Mammary epithelial cell (primary cell): ENCODE measurements at regions of chr22 and their contacts with region 1.

Region 1: DNA sequence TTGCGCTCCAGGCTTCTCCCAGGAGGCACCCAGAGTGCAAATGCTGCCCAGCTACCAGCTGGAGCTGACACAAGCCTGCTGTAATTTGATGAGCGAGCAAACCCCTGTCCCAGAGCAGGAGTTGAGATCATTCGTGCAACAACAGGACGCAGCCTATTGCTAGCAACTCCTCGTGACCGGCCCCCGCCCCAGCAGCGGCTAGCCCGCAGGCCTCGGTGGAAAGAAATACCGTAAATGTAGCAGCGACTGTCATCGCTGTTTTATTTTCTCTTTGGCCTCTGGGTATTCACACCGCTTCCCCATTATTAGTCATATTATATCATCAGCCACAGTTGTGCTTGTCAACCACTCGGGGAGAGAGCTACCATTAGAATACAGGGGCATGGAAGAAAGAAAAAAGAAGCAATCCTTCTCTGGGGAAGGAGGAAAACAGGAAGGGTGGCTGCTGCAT is 59.2 kb upstream of the ATXN10 start:
- DNase-seq: peak; percentile 91
- H3K4me3 ChIP-seq: peak overlapping the region in 2 of 3 experiments; percentile 8 to 24
- H3K27ac ChIP-seq: peak overlapping the region; percentile 64
- H3K4me1 ChIP-seq: peaks cover 20% of the 10 kb centered on the region
- H3K27me3 ChIP-seq: no peaks in the 10 kb centered on the region
- CTCF ChIP-seq: no peak

Region 2: GRCh38 chr22:45638834-45639746 is 26.6 kb after region 1 on chr22:
- CTCF ChIA-PET with region 1: no interaction called
- dilution Hi-C with region 1: loop called (anchors 5 kb)
- in situ Hi-C with region 1: no loop called
- intact Hi-C with region 1: no loop called
- DNase-seq: peak; percentile 79
- H3K4me3 ChIP-seq: no peak overlapping the region
- H3K27ac ChIP-seq: peak overlapping the region; percentile 78
- H3K4me1 ChIP-seq: peaks cover 22% of the 10 kb centered on the region
- H3K27me3 ChIP-seq: no peaks in the 10 kb centered on the region
- CTCF ChIP-seq: peak in 1 of 2 donors; percentile 13

Region 3: DNA sequence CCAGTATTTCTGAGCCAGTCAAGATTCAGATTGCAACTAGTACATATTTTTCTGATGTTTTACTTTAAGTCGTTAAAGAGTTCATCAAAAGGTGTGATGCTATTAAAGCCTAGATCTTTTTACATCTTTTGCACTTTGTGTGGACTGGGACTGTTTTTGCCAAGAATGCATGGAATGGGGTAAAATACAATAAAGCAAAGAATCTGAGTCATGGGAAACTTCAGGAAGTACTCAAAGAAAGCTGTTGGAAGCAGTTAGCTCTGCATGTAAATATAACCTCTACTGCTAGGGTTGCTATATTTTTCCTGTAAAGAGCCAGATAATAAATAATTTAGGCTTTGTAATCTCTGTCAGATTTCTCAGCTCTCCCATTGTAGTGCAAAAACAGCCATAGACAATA is 80.1 kb after region 1 on chr22:
- CTCF ChIA-PET with region 1: no interaction called
- dilution Hi-C with region 1: loop called (anchors 5 kb)
- in situ Hi-C with region 1: no loop called
- intact Hi-C with region 1: no loop called
- DNase-seq: no peak
- H3K4me3 ChIP-seq: no peak overlapping the region
- H3K27ac ChIP-seq: no peak overlapping the region
- H3K4me1 ChIP-seq: peaks cover 31% of the 10 kb centered on the region
- H3K27me3 ChIP-seq: no peaks in the 10 kb centered on the region
- CTCF ChIP-seq: no peak

Region 4: DNA sequence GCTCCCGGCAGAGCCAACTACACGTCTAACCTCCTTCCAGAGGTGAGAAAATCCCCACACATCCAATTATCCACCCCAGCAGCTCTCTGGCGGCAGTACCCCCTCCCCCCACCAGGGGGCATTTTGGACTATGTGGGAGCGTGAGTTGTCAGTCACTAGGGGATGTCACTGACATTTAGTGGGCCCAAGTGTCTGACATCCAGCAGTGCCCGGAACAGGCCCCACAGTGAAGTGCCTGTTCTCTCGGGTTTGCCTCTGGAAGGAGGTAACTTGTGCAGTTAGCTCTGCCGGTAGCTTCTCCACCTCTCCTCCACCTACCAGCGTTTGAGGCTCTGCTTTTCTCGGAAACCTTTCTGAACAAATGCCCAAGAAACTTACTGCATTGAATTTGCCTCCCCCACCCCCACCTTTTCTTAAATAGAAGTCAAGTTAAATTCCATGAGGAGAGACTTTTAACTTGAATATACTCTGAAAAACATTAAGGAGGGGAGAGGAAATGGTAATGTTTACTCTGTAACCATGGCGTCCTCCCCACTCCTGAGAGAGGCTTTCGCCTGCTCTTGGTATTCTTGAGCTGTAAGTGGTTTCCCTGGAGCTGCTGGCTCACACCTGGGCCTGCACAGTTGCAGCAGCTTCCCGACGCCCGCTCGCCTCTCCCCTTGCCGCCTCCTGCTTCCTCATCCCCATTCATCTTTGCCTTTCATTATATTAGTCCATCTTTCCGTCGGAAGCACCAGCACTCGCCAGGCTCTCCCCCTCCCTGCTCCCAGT is 251.7 kb after region 1 on chr22:
- CTCF ChIA-PET with region 1: no interaction called
- dilution Hi-C with region 1: no loop called
- in situ Hi-C with region 1: no loop called
- intact Hi-C with region 1: no loop called
- DNase-seq: peak; percentile 24
- H3K4me3 ChIP-seq: no peak overlapping the region
- H3K27ac ChIP-seq: no peak overlapping the region
- H3K4me1 ChIP-seq: peaks cover 15% of the 10 kb centered on the region
- H3K27me3 ChIP-seq: peaks cover 21% of the 10 kb centered on the region
- CTCF ChIP-seq: peak; percentile 94 to 95

Region 5: DNA sequence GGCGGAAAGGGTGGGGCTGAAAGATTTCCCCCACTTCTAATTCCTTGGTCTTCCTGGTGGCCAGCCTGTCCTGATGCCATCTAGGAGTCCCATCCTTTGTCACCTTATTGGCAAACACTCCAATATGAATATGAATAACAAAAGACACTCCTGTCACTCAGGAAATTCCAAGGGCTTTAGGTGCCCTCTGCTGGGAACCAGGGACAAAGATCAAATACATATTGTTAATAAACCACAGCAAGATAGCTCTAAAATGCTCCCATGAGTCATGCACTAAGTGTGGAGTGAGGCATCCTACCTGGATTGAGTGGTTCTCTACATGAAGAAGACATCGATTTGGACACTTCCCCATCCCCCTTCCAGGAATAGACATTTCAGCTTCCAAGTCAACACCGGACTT is 1973.5 kb after region 1 on chr22:
- CTCF ChIA-PET with region 1: no interaction called
- dilution Hi-C with region 1: no loop called
- in situ Hi-C with region 1: loop called (anchors 10 to 25 kb)
- intact Hi-C with region 1: no loop called
- DNase-seq: no peak
- H3K4me3 ChIP-seq: no peak overlapping the region
- H3K27ac ChIP-seq: no peak overlapping the region
- H3K4me1 ChIP-seq: no peaks in the 10 kb centered on the region
- H3K27me3 ChIP-seq: no peaks in the 10 kb centered on the region
- CTCF ChIP-seq: no peak

Region 6: GRCh38 chr22:47593911-47594311 is 1981.4 kb after region 1 on chr22:
- CTCF ChIA-PET with region 1: no interaction called
- dilution Hi-C with region 1: no loop called
- in situ Hi-C with region 1: loop called (anchors 10 to 25 kb)
- intact Hi-C with region 1: no loop called
- DNase-seq: no peak
- H3K4me3 ChIP-seq: no peak overlapping the region
- H3K27ac ChIP-seq: no peak overlapping the region
- H3K4me1 ChIP-seq: no peaks in the 10 kb centered on the region
- H3K27me3 ChIP-seq: no peaks in the 10 kb centered on the region
- CTCF ChIP-seq: no peak